Breast epithelium (tissue), 4 donors: ENCODE measurements at regions of chr9 and their contacts with region 1.

Region 1: DNA sequence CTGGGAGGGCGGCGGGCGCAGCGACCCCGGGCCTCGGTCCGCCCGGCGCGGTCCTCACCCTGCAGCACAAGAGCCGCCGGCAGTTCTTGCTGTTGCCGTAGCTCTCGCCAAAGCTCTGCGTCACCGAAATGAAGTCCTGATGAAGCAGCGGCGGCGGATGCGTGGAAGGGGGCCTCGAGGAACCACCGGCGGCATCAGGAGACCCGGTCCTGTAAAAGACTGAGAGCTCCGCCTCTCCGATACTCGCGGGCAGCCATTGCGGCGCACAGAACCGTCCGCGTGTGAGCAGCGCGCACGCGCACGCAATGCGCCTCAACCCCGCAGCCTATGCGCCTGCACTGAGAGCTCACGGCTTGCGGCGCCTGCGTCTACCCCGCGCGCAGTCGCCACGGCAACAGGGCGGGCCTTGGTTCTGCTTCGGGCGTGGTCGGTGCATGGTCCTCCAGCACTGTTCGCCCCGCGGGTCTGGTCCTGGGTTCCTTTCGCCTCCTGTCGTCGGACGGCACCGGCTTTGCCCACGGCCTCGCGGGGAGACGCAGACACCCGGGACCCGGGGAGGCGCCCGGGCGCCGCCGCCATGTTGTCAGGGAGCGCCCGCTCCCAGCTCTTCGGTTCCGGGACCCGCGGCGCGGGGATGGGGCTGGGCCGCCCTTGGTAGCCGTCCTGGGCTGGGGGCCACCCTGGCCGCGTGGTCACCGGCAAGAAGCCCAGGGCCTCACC is 9.3 kb upstream of the GRIN1 start:
- DNase-seq: peak; percentile 76 to 80
- H3K4me3 ChIP-seq: peak overlapping the region; percentile 63 to 82 (median 80)
- H3K27ac ChIP-seq: peak overlapping the region; percentile 73 to 75
- H3K4me1 ChIP-seq: peaks cover 0 to 13% of the 10 kb centered on the region in 2 donors
- H3K27me3 ChIP-seq: no peaks in the 10 kb centered on the region
- CTCF ChIP-seq: no peak
- POLR2A ChIP-seq: no peak

Region 2: GRCh38 chr9:137150617-137151457 is 21.2 kb after region 1 on chr9:
- intact Hi-C with region 1: no loop called
- DNase-seq: no peak
- H3K4me3 ChIP-seq: no peak overlapping the region
- H3K27ac ChIP-seq: no peak overlapping the region
- H3K4me1 ChIP-seq: no peaks in the 10 kb centered on the region
- H3K27me3 ChIP-seq: peaks cover 0 to 46% of the 10 kb centered on the region in 2 donors
- CTCF ChIP-seq: no peak
- POLR2A ChIP-seq: no peak

Region 3: DNA sequence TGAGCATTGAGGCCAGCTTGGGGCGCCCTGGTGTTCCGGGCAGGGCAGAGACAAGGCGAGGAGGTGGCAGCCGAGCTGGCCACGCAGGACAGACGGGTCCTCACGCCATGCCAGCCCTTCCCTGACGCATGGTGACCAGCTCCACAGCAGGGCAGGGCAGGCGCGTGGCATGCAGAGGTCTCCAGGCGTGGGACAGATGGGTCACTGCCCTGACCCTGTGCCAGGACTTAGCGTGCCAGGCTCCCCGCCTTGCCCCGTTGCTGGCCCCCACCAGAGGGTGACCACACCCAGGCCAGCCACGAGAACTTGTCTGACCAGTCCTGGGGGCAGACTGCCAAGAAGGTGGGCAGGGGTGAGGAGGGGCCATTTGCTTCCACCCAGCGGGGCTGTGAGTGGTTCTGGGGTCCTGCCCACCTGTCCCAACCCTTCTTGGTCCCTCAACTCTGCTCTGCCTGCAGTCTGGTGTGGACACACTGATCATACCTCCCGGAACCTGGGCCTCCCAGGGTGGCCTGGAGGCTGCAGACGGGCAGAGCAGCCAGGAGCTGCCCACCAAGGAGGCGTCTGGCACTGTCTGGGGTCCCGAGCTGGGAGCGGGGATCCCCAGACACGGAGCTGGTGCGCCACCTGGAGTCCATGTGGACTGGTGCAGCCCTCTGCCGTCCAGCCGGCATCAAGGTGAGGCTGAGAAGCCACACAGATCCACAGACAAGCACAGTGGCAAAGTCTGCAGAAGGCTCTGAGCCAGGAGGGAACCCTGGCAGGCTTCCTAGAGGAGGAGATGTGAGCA is 97.6 kb after region 1 on chr9 and contains the start of gene RNF224:
- intact Hi-C with region 1: loop called (anchors 5 kb)
- DNase-seq: peak; percentile 76 to 89
- H3K4me3 ChIP-seq: peak within 1 kb of the TSS in 2 of 3 donors; percentile 6 to 25
- H3K27ac ChIP-seq: peak within 1 kb of the TSS; percentile 53 to 78
- H3K4me1 ChIP-seq: peaks cover 7% of the 10 kb centered on the region in 2 donors
- H3K27me3 ChIP-seq: peaks cover 4 to 43% of the 10 kb centered on the region in 2 donors
- CTCF ChIP-seq: peak; percentile 57 to 99 (median 89)
- POLR2A ChIP-seq: no peak
- total RNA-seq, gene RNF224: 0.29 TPM in 1 of 3 donors, not detected in the others

Region 4: GRCh38 chr9:137269231-137269772 is 139.7 kb after region 1 on chr9:
- intact Hi-C with region 1: no loop called
- DNase-seq: peak in 1 of 2 donors; percentile 64
- H3K4me3 ChIP-seq: no peak overlapping the region
- H3K27ac ChIP-seq: peak overlapping the region; percentile 71 to 84
- H3K4me1 ChIP-seq: peaks cover 0 to 3% of the 10 kb centered on the region in 2 donors
- H3K27me3 ChIP-seq: no peaks in the 10 kb centered on the region
- CTCF ChIP-seq: no peak
- POLR2A ChIP-seq: no peak